Activated T-helper 1 cell treated with anti-CD3 and anti-CD28 coated beads, Interleukin-12 subunit alpha, Interleukin-12 subunit beta, Interleukin-2, Interleukin-4 antibody, amounts not matched to agents 30 ng/mL and 10 ng/mL and 1 ng/mL, durations not matched to agents 14 hours and 24 hours and 36 hours (primary cell): ENCODE measurements at regions of chr6 and their contacts with region 1.

Region 1: DNA sequence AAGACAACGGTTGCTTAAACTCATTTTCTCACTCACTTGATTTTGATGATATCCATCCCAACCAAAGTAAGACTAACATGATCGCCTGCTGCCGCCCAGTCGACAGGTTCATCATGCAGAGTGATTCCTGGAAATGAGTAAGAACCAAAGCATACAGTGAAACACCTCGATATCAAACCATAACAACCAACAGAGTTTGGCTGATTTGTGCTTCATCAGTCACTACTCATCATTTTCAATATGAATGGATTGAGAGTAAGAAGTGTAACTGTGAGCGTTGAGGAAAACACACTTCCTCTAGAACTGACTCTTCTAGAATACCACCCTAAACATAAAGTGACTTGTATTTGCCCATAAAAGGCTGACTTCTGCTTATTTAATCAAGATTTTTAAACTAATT is 29.2 kb upstream of the ALDH8A1 start:
- DNase-seq: peak; percentile 52
- H3K4me3 Mint-ChIP-seq: peak overlapping the region; percentile 43
- H3K27ac Mint-ChIP-seq: peak overlapping the region; percentile 65
- H3K4me1 Mint-ChIP-seq: peaks cover 58% of the 10 kb centered on the region
- H3K27me3 Mint-ChIP-seq: no peaks in the 10 kb centered on the region

Region 2: DNA sequence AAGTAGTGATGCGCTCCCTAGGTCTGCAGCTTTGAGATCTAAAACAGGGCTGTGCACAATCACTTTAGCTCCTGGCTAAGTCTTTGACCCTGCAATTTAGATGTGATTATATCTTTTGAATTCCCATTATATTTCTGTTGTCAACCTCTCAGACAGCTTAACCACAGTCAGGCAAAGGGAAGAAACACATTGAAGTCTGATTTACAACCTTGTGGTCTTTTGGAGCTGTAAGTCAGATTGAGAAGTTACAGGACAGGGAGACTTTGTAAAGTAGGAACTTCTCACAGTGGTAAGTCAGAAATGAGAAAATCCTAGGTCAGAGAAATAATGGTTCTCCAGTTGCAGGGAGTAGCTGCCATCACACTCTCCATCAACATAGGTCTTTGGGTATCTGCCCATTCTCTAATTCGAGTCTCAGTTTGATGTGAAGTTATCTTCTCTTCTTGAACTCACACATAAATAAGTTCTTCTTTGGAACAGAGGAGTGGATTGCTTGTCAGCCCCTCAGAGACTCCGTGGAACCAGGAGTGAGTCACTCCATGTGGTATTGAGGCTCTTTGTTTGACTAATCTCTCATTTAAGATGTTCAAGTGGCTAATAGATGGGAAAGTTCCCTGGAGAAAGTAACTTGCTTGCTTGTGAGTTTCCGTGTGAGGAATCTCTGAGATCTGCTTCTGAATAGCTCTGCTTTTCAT is 626.2 kb before region 1 on chr6:
- intact Hi-C with region 1: loop called (anchors 1 kb)
- DNase-seq: no peak
- H3K4me3 Mint-ChIP-seq: peak overlapping the region; percentile 77
- H3K27ac Mint-ChIP-seq: peak overlapping the region; percentile 49
- H3K4me1 Mint-ChIP-seq: peaks cover 30% of the 10 kb centered on the region
- H3K27me3 Mint-ChIP-seq: no peaks in the 10 kb centered on the region

Region 3: GRCh38 chr6:134961366-134961765 is 17.8 kb before region 1 on chr6:
- intact Hi-C with region 1: loop called (anchors 1 kb)
- DNase-seq: no peak
- H3K4me3 Mint-ChIP-seq: no peak overlapping the region
- H3K27ac Mint-ChIP-seq: peak overlapping the region; percentile 5
- H3K4me1 Mint-ChIP-seq: peaks cover 22% of the 10 kb centered on the region
- H3K27me3 Mint-ChIP-seq: no peaks in the 10 kb centered on the region

Region 4: GRCh38 chr6:135030056-135030473 is 50.9 kb after region 1 on chr6:
- intact Hi-C with region 1: loop called (anchors 1 kb)
- DNase-seq: peak; percentile 12
- H3K4me3 Mint-ChIP-seq: peak overlapping the region; percentile 44
- H3K27ac Mint-ChIP-seq: peak overlapping the region; percentile 84
- H3K4me1 Mint-ChIP-seq: peaks cover 67% of the 10 kb centered on the region
- H3K27me3 Mint-ChIP-seq: no peaks in the 10 kb centered on the region

Region 5: GRCh38 chr6:135094403-135094848 is 115.3 kb after region 1 on chr6:
- intact Hi-C with region 1: loop called (anchors 1 kb)
- DNase-seq: peak; percentile 20
- H3K4me3 Mint-ChIP-seq: peak overlapping the region; percentile 24
- H3K27ac Mint-ChIP-seq: peak overlapping the region; percentile 95
- H3K4me1 Mint-ChIP-seq: peaks cover 65% of the 10 kb centered on the region
- H3K27me3 Mint-ChIP-seq: peaks cover 2% of the 10 kb centered on the region

Region 6: GRCh38 chr6:135145063-135145800 is 166.1 kb after region 1 on chr6:
- intact Hi-C with region 1: loop called (anchors 1 kb)
- DNase-seq: no peak
- H3K4me3 Mint-ChIP-seq: peak overlapping the region; percentile 55
- H3K27ac Mint-ChIP-seq: peak overlapping the region; percentile 83
- H3K4me1 Mint-ChIP-seq: peaks cover 80% of the 10 kb centered on the region
- H3K27me3 Mint-ChIP-seq: no peaks in the 10 kb centered on the region

Region 7: GRCh38 chr6:135423649-135424128 is 444.5 kb after region 1 on chr6:
- intact Hi-C with region 1: loop called (anchors 5 kb)
- DNase-seq: no peak
- H3K4me3 Mint-ChIP-seq: no peak overlapping the region
- H3K27ac Mint-ChIP-seq: peak overlapping the region; percentile 16
- H3K4me1 Mint-ChIP-seq: peaks cover 11% of the 10 kb centered on the region
- H3K27me3 Mint-ChIP-seq: no peaks in the 10 kb centered on the region

Region 8: GRCh38 chr6:135974426-135974825 is 995.3 kb after region 1 on chr6:
- intact Hi-C with region 1: no loop called
- DNase-seq: no peak
- H3K4me3 Mint-ChIP-seq: no peak overlapping the region
- H3K27ac Mint-ChIP-seq: no peak overlapping the region
- H3K4me1 Mint-ChIP-seq: no peaks in the 10 kb centered on the region
- H3K27me3 Mint-ChIP-seq: peaks cover 2% of the 10 kb centered on the region

Region 9: GRCh38 chr6:136235217-136235532 is 1256.0 kb after region 1 on chr6:
- intact Hi-C with region 1: no loop called
- DNase-seq: no peak
- H3K4me3 Mint-ChIP-seq: no peak overlapping the region
- H3K27ac Mint-ChIP-seq: no peak overlapping the region
- H3K4me1 Mint-ChIP-seq: peaks cover 29% of the 10 kb centered on the region
- H3K27me3 Mint-ChIP-seq: no peaks in the 10 kb centered on the region